ENCODE measurements at regions of chr7 and their contacts with region 1.

Region 1: GRCh38 chr7:116984917-116985316 is 31.6 kb downstream of the ST7 start:
- DNase-seq: no peak
- H3K4me3 ChIP-seq: no peak overlapping the region
- H3K27ac ChIP-seq: no peak overlapping the region
- H3K4me1 ChIP-seq: no peaks in the 10 kb centered on the region
- H3K27me3 ChIP-seq: no peaks in the 10 kb centered on the region
- CTCF ChIP-seq: peak in 2 of 3 donors; percentile 36 to 37
- EP300 ChIP-seq: no peak
- POLR2A ChIP-seq: no peak

Region 2: DNA sequence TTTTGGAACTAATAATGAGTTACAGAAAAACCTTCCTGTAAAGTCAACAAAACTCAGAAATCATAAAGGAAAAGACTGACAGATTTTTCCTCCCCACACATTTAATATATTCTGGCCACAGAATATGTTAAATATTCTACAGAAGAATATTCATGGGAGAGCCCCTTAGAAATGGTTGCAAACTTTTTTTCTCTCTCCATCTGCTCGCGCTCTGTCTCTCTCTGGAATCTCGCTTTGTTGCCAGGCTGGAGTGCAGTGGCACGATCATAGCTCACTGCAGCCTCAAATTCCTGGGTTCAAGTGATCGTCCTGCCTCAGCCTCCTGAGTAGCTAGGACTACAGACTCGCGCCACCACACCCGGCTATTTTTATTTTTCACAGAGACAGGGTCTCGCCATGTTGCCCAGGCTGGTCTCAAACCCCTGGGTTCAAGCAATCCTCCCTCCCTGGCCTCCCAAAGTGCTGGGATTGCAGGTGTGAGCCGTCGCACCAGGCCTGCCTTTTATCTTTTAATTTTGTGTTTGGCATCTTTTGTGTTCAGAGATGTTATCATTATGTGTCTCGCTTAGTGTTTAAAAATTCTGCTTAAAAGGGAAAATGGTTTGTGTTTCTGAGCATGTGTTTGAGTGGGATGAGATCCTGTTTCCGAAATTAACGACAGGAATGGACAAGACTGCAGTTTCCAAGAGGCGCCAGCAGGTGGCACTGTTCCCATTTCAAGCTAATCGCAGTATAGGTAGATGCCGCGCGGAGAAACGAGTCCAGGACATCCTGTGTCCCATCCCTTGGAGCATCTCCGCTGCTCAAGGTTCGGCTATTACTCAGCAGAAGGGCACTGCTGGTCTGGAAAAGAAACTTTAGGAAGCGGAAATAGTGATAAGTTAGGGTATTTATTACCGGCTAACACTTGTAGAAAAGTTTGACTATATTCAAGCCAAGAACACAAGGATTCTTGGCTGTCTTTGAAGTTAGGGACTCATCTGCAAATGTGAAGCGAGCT is 54.7 kb before region 1 on chr7:
- intact Hi-C with region 1: loop called in 1 of 4 experiments (anchors 10 kb)
- DNase-seq: peak; percentile 71 to 89 (median 84)
- H3K4me3 ChIP-seq: no peak overlapping the region
- H3K27ac ChIP-seq: no peak overlapping the region
- H3K4me1 ChIP-seq: no peaks in the 10 kb centered on the region
- H3K27me3 ChIP-seq: no peaks in the 10 kb centered on the region
- CTCF ChIP-seq: peak; percentile 79 to 85 (median 81)
- EP300 ChIP-seq: no peak
- POLR2A ChIP-seq: no peak

Region 3: GRCh38 chr7:117119192-117119924 is 134.4 kb after region 1 on chr7:
- intact Hi-C with region 1: loop called in 3 of 4 experiments (anchors 5 to 10 kb)
- DNase-seq: peak; percentile 70 to 87 (median 82)
- H3K4me3 ChIP-seq: no peak overlapping the region
- H3K27ac ChIP-seq: no peak overlapping the region
- H3K4me1 ChIP-seq: no peaks in the 10 kb centered on the region
- H3K27me3 ChIP-seq: no peaks in the 10 kb centered on the region
- CTCF ChIP-seq: peak; percentile 42 to 66 (median 61)
- EP300 ChIP-seq: no peak
- POLR2A ChIP-seq: no peak

Region 4: DNA sequence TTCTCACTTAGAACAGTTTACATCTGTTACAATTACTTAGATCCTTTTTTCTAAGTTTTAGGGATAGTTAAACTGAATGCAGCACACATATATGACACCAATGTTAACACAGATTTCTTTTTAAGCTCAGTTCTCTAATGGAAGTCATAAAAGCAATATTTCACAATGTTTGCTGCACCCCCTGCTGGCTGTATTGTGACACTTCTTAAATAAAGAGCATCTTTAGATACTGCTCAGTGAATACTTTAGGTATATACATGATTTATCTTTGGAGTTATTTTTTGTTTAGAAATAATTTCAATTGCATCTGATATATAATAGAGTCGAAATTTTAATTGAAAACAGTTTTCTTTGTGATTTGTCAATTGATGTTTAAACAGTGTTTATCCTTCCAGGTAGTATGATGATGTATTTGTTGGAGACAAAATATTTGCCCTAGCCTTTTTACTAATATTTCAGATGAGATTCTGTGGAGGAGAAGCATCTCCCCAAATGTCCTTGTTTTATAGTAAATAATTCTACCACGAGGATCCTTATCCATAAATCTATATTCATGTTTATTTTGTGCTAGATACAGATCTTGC is 142.8 kb after region 1 on chr7:
- intact Hi-C with region 1: loop called in 1 of 4 experiments (anchors 5 kb)
- DNase-seq: peak in 4 of 5 donors; percentile 11 to 60 (median 39)
- H3K4me3 ChIP-seq: no peak overlapping the region
- H3K27ac ChIP-seq: no peak overlapping the region
- H3K4me1 ChIP-seq: no peaks in the 10 kb centered on the region
- H3K27me3 ChIP-seq: no peaks in the 10 kb centered on the region
- CTCF ChIP-seq: peak; percentile 56 to 67 (median 61)
- EP300 ChIP-seq: no peak
- POLR2A ChIP-seq: no peak

Region 5: GRCh38 chr7:117825132-117825531 is 840.2 kb after region 1 on chr7:
- intact Hi-C with region 1: no loop called
- DNase-seq: no peak
- H3K4me3 ChIP-seq: no peak overlapping the region
- H3K27ac ChIP-seq: no peak overlapping the region
- H3K4me1 ChIP-seq: no peaks in the 10 kb centered on the region
- H3K27me3 ChIP-seq: no peaks in the 10 kb centered on the region
- CTCF ChIP-seq: no peak
- EP300 ChIP-seq: no peak
- POLR2A ChIP-seq: no peak